ENCODE measurements at regions of chr15 and their contacts with region 1.

Region 1: GRCh38 chr15:50003786-50004334 is 115.2 kb downstream of the ATP8B4 start:
- DNase-seq: peak; percentile 91
- H3K4me3 ChIP-seq: no peak overlapping the region
- H3K27ac ChIP-seq: peak overlapping the region in 3 of 4 donors; percentile 36 to 46 (median 37)
- H3K4me1 ChIP-seq: peaks cover 0 to 36% (median 24%) of the 10 kb centered on the region in 4 donors
- H3K27me3 ChIP-seq: no peaks in the 10 kb centered on the region
- CTCF ChIP-seq: peak; percentile 50 to 73 (median 58)
- EP300 ChIP-seq: no peak
- POLR2A ChIP-seq: no peak

Region 2: DNA sequence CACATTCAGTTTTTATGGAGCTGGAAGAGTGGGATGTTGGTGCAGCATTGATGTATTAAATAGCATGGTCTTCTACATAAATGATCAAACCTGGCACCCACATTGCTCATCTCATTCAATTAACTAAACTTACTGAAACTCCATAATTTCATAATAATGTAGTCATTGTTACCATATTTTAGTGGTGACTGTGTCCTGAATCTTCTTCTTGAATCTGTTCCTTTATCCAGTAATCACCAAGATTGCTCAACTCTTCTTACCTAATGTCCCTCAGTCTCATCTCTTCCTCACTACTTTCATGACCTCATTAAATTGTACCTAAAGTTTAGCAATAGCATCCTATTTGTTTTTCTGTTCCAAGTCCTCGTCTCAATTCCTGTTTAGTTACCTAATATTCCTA is 511.0 kb before region 1 on chr15:
- intact Hi-C with region 1: loop called (anchors 10 kb)
- DNase-seq: no peak
- H3K4me3 ChIP-seq: no peak overlapping the region
- H3K27ac ChIP-seq: no peak overlapping the region
- H3K4me1 ChIP-seq: peaks cover 0 to 39% (median 30%) of the 10 kb centered on the region in 4 donors
- H3K27me3 ChIP-seq: no peaks in the 10 kb centered on the region
- CTCF ChIP-seq: no peak
- EP300 ChIP-seq: no peak
- POLR2A ChIP-seq: no peak

Region 3: DNA sequence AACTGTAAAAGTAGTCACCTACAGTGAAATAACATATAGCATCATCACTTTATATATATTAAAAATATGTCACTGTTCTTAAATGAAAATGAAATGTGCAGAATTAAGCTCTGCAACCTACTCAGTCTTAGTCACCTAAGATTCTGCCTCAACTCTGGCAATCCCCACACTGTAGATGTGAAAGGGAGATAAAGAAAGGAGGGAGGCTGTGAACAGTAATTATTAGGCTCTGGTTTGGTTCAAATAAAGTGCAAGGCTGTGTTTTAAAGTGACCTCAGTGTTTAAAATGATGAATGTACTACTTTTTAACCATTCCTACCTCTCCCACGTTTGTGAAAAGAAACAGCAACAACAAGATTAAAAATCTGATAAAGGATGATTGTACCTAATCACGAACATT is 43.0 kb after region 1 on chr15:
- intact Hi-C with region 1: loop called (anchors 5 kb)
- DNase-seq: no peak
- H3K4me3 ChIP-seq: no peak overlapping the region
- H3K27ac ChIP-seq: no peak overlapping the region
- H3K4me1 ChIP-seq: peaks cover 0 to 9% (median 3%) of the 10 kb centered on the region in 4 donors
- H3K27me3 ChIP-seq: no peaks in the 10 kb centered on the region
- CTCF ChIP-seq: no peak
- EP300 ChIP-seq: no peak
- POLR2A ChIP-seq: no peak